ENCODE measurements at regions of chr13 and their contacts with region 1.

Region 1: DNA sequence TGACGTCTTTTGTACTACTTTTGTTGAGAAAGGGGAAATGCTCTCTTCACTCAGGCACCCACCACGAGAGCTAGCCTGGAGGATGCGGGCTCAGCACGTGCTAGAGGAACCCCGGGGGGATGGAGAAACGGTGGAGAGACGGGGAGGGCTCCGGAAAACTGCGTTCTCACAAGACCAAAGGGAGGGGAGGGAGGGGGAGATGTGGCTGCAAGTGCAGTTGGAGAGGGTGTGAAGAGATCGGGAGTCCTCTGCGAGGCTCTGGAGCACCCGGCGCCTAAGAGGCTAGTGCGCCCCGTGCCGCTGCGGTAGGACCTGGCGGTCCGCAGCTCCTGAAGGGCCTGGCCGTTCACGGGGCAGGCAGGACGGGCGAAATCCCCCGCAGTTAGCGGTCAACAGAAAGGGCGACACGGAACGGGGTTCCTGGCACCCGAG is 43.4 kb upstream of the XPO4 start:
- DNase-seq: peak in 1 of 2 donors; percentile 26
- ATAC-seq: peak in 6 of 8 donors; percentile 20 to 63 (median 28)
- H3K4me3 ChIP-seq: peak overlapping the region in 8 of 10 donors; percentile 11 to 39 (median 28)
- H3K27ac ChIP-seq: no peak overlapping the region
- H3K4me1 ChIP-seq: peaks cover 0 to 17% (median 4%) of the 10 kb centered on the region in 9 donors
- H3K27me3 ChIP-seq: peaks cover 0 to 21% (median 8%) of the 10 kb centered on the region in 7 donors
- CTCF ChIP-seq: no peak

Region 2: GRCh38 chr13:20425819-20426219 is 520.1 kb before region 1 on chr13:
- intact Hi-C with region 1: no loop called
- DNase-seq: no peak
- ATAC-seq: no peak
- H3K4me3 ChIP-seq: no peak overlapping the region
- H3K27ac ChIP-seq: peak overlapping the region in 3 of 10 donors; percentile 10 to 66 (median 32)
- H3K4me1 ChIP-seq: peaks cover 0 to 19% (median 8%) of the 10 kb centered on the region in 9 donors
- H3K27me3 ChIP-seq: no peaks in the 10 kb centered on the region
- CTCF ChIP-seq: no peak

Region 3: DNA sequence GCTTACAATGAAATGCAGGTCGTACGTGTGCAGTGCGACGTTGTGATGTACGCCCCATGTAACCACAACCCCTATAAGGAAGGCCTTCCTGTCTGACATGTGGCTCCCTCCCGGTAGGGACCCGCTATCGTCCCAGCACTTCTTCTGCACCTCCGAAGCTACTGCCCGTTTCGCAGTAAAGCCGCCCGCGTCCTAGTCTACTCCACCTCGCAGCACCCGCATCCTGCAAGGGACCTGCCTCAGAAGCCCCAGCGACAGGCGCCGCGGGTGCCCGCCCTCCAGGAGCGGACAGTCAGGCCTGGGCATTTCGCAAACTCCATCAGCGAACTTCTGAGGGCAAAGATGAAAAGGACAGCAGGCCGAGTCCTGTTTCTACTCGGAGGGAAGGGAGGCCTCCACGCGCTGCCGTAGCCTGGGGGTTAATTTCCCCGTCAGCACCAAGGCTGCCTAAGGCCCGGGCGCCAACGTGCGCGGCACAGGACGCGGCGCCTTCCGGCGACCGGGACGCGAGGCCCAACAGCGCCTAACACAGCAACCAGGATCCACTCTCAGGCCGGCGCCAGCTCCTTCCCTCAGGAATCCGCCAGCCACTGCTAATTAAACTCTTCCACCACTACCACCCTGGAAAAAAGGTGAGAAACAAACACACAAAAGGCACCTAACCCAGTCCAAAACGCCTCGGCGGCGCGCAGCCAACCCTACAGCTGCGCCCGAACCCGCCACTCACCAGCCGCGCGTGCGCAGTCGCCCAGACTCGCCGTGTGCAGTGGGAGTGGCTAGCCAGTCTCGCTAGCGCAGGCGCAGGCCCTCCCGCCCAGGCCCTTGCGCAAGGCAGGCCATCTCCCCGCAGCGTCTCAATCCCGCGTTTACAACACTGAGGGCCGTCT is 172.5 kb before region 1 on chr13 and contains the start of gene EEF1AKMT1:
- intact Hi-C with region 1: no loop called
- DNase-seq: peak; percentile 92 to 97
- ATAC-seq: peak; percentile 97 to 100 (median 99)
- H3K4me3 ChIP-seq: peak within 1 kb of the TSS; percentile 52 to 86 (median 66)
- H3K27ac ChIP-seq: peak within 1 kb of the TSS; percentile 85 to 95 (median 89)
- H3K4me1 ChIP-seq: peaks cover 0 to 15% (median 9%) of the 10 kb centered on the region in 9 donors
- H3K27me3 ChIP-seq: no peaks in the 10 kb centered on the region
- CTCF ChIP-seq: no peak
- total RNA-seq, gene EEF1AKMT1: 6.1 to 9.9 (median 7.9) TPM

Region 4: GRCh38 chr13:21124852-21125251 is 178.9 kb after region 1 on chr13:
- intact Hi-C with region 1: loop called in 6 of 10 experiments (anchors 5 to 10 kb)
- DNase-seq: no peak
- ATAC-seq: no peak
- H3K4me3 ChIP-seq: no peak overlapping the region
- H3K27ac ChIP-seq: no peak overlapping the region
- H3K4me1 ChIP-seq: no peaks in the 10 kb centered on the region
- H3K27me3 ChIP-seq: no peaks in the 10 kb centered on the region
- CTCF ChIP-seq: no peak

Region 5: DNA sequence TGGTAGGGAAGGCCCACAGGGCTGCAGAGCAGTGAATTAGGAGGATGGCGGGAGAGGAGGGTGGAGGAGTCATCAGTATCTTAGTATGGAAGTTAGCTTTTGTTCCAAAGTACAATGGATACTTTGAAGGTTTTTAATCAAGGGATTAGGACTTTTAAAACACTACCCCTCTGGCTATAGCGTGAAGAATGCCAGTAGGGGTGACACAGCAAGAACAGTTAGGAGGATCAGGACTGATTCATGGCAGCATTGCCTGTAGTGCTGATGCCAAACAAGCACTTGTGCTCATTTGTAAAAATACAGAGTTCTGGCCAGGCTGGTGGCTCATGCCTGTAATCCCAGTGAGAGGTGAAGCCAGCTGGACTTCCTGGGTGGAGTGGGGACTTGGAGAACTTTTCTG is 184.1 kb after region 1 on chr13:
- intact Hi-C with region 1: loop called (anchors 2 to 10 kb)
- DNase-seq: no peak
- ATAC-seq: no peak
- H3K4me3 ChIP-seq: no peak overlapping the region
- H3K27ac ChIP-seq: no peak overlapping the region
- H3K4me1 ChIP-seq: no peaks in the 10 kb centered on the region
- H3K27me3 ChIP-seq: peaks cover 0 to 6% (median 0%) of the 10 kb centered on the region in 7 donors
- CTCF ChIP-seq: no peak

Region 6: GRCh38 chr13:21137696-21138095 is 191.7 kb after region 1 on chr13:
- intact Hi-C with region 1: loop called in 9 of 10 experiments (anchors 2 to 10 kb)
- DNase-seq: no peak
- ATAC-seq: no peak
- H3K4me3 ChIP-seq: no peak overlapping the region
- H3K27ac ChIP-seq: no peak overlapping the region
- H3K4me1 ChIP-seq: peaks cover 11 to 24% (median 18%) of the 10 kb centered on the region in 9 donors
- H3K27me3 ChIP-seq: no peaks in the 10 kb centered on the region
- CTCF ChIP-seq: no peak

Region 7: DNA sequence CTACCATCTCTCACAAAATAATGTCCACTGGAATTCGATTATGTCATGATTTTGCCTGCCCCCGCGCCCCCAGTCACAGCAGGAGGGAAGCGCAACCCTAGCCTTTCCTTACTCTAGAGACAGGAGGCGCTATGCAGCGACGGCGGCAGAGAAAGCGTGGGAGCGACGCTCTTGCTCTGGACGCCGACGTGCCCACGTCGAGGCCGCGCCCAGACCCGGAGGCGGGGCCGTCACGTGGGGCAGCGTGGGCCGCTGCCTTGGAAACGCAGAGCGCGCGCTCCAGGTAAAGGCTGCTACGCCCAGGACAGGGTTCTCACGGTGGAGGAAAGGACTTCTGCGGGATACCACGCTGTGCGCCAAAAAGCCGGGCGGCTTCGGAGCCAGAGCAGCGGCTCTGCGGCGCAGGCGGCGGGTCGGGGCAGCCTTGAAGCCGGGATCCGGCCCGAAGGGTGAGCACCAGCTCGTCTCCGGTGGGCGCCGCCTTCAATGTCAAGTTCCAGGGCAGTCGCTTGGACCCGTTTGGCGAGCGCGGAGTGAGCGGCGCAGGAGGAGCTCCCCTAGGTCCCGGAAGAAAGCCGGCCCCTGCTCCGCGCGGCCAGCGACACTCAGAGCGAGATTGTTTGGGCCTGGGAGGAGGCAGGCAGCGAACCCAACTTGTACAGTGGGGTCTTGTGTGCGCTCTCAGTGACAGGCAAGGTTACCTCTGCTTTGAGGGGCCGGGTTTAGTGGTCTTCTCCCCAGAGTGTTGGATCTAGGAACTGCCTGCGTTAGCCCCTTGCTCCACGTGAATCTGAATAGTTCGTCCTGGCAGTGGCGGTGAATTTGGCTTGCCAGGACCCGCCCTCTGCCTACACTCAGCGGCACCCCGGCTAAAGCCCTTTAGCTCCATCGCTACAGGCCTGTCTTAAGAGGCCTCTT is 352.2 kb after region 1 on chr13:
- intact Hi-C with region 1: loop called in 2 of 10 experiments (anchors 10 kb)
- DNase-seq: peak; percentile 83 to 85
- ATAC-seq: peak; percentile 99 to 100 (median 100)
- H3K4me3 ChIP-seq: peak overlapping the region; percentile 69 to 99 (median 86)
- H3K27ac ChIP-seq: peak overlapping the region in 9 of 10 donors; percentile 67 to 76 (median 71)
- H3K4me1 ChIP-seq: peaks cover 5 to 25% (median 20%) of the 10 kb centered on the region in 9 donors
- H3K27me3 ChIP-seq: no peaks in the 10 kb centered on the region
- CTCF ChIP-seq: peak; percentile 78 to 97 (median 90)